Mammary epithelial cell (primary cell): ENCODE measurements at regions of chr17 and their contacts with region 1.

Region 1: GRCh38 chr17:79242873-79243602 is 168.4 kb downstream of the ENGASE start:
- DNase-seq: no peak
- H3K4me3 ChIP-seq: no peak overlapping the region
- H3K27ac ChIP-seq: no peak overlapping the region
- H3K4me1 ChIP-seq: no peaks in the 10 kb centered on the region
- H3K27me3 ChIP-seq: no peaks in the 10 kb centered on the region
- CTCF ChIP-seq: no peak

Region 2: GRCh38 chr17:79126139-79126538 is 116.9 kb before region 1 on chr17:
- CTCF ChIA-PET with region 1: interaction called, 11 read pairs
- dilution Hi-C with region 1: no loop called
- in situ Hi-C with region 1: no loop called
- intact Hi-C with region 1: no loop called
- DNase-seq: no peak
- H3K4me3 ChIP-seq: no peak overlapping the region
- H3K27ac ChIP-seq: no peak overlapping the region
- H3K4me1 ChIP-seq: no peaks in the 10 kb centered on the region
- H3K27me3 ChIP-seq: peaks cover 21% of the 10 kb centered on the region
- CTCF ChIP-seq: peak in 1 of 2 donors; percentile 36

Region 3: GRCh38 chr17:79304884-79305283 is 61.8 kb after region 1 on chr17:
- CTCF ChIA-PET with region 1: no interaction called
- dilution Hi-C with region 1: loop called (anchors 5 kb)
- in situ Hi-C with region 1: no loop called
- intact Hi-C with region 1: no loop called
- DNase-seq: no peak
- H3K4me3 ChIP-seq: no peak overlapping the region
- H3K27ac ChIP-seq: no peak overlapping the region
- H3K4me1 ChIP-seq: no peaks in the 10 kb centered on the region
- H3K27me3 ChIP-seq: peaks cover 15% of the 10 kb centered on the region
- CTCF ChIP-seq: no peak

Region 4: DNA sequence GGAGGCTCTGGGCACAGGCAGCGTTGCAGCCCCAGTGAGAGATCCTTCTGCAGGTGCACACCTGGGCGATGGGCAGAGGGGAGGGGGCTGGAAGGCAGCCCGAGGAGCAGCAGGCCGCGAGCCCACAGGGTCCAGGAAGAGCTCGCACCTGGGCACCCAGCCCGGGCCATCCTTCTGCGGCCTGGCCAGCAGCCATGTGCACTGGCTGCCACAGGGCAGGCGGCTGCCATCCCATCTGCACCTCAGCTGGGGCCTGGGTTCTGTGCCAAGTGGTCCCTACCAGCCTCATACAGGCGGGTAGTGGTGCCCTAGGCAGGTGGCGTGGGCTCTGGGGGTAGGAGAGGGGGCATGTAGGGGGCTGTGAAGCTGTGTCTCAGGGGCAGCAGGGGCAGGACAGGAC is 170.6 kb after region 1 on chr17:
- CTCF ChIA-PET with region 1: no interaction called
- dilution Hi-C with region 1: no loop called
- in situ Hi-C with region 1: no loop called
- intact Hi-C with region 1: no loop called
- DNase-seq: no peak
- H3K4me3 ChIP-seq: no peak overlapping the region
- H3K27ac ChIP-seq: no peak overlapping the region
- H3K4me1 ChIP-seq: no peaks in the 10 kb centered on the region
- H3K27me3 ChIP-seq: peaks cover 11% of the 10 kb centered on the region
- CTCF ChIP-seq: no peak